Caco-2 (cell line): ENCODE measurements at regions of chr4 and their contacts with region 1.

Region 1: DNA sequence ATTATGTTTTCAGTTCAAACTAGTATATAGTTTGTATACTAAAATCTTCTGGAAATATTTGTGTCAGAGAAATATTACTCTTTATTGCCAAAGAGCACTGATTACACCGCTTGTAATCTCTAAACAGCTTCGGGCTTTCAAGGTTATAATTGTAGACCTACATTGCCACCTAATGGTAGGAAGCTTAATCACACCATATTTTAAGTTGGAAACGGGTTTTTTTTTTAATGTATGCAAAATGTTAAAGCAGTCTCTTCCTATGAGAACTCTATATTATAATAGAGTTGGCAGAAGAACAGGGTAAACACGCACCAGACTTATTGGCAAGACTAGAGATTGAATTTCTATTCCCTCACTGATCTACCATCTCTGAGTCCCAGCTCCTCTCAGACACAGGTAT is 19.5 kb upstream of the NFXL1 start:
- DNase-seq: peak in 1 of 2 experiments; percentile 31
- H3K4me3 ChIP-seq: no peak overlapping the region
- H3K4me3 Mint-ChIP-seq: no peak overlapping the region
- H3K27ac Mint-ChIP-seq: no peak overlapping the region
- H3K4me1 ChIP-seq: no peaks in the 10 kb centered on the region
- H3K4me1 Mint-ChIP-seq: peaks cover 4% of the 10 kb centered on the region
- H3K27me3 ChIP-seq: no peaks in the 10 kb centered on the region
- H3K27me3 Mint-ChIP-seq: no peaks in the 10 kb centered on the region
- CTCF ChIP-seq: peak; percentile 40 to 51

Region 2: GRCh38 chr4:47686294-47686872 is 247.5 kb before region 1 on chr4:
- CTCF ChIA-PET with region 1: interaction called, 3 read pairs
- POLR2A ChIA-PET with region 1: no interaction called
- intact Hi-C with region 1: loop called (anchors 1 kb)
- DNase-seq: peak; percentile 54 to 70
- H3K4me3 ChIP-seq: no peak overlapping the region
- H3K4me3 Mint-ChIP-seq: no peak overlapping the region
- H3K27ac Mint-ChIP-seq: no peak overlapping the region
- H3K4me1 ChIP-seq: no peaks in the 10 kb centered on the region
- H3K4me1 Mint-ChIP-seq: no peaks in the 10 kb centered on the region
- H3K27me3 ChIP-seq: no peaks in the 10 kb centered on the region
- H3K27me3 Mint-ChIP-seq: peaks cover 8% of the 10 kb centered on the region
- CTCF ChIP-seq: peak; percentile 68 to 74

Region 3: DNA sequence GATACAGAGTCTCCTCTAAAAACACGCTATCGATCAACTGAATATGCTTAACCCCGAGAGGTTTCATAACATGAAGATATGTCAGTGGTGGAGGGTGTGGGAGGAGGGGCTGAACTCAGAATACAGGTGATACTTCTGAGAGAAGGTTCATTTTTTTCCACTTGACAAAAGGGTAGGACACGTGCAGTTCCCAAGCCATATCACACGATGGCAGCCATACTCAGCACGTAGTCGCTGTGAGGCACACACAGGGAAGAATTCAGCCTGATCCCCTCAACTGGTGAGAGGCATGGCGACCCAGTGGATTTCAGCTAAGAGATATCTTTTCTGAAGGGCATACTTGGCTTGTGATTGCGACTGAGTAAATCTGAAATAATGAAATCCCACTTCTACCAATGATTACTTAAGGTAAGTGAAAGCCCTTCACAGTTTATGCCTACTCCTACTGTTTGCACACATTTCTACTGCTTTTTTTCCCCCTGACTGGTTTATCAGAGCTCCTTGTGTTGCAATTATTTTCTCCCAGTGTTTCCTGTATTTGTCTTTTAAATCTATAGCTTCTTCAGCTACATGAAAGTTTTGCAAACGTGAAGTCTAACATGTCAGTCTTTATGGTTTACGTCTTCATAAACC is 229.0 kb before region 1 on chr4:
- CTCF ChIA-PET with region 1: interaction called, 3 read pairs
- POLR2A ChIA-PET with region 1: no interaction called
- intact Hi-C with region 1: loop called (anchors 1 kb)
- DNase-seq: peak; percentile 63 to 67
- H3K4me3 ChIP-seq: no peak overlapping the region
- H3K4me3 Mint-ChIP-seq: no peak overlapping the region
- H3K27ac Mint-ChIP-seq: no peak overlapping the region
- H3K4me1 ChIP-seq: no peaks in the 10 kb centered on the region
- H3K4me1 Mint-ChIP-seq: no peaks in the 10 kb centered on the region
- H3K27me3 ChIP-seq: no peaks in the 10 kb centered on the region
- H3K27me3 Mint-ChIP-seq: no peaks in the 10 kb centered on the region
- CTCF ChIP-seq: peak; percentile 49 to 73

Region 4: GRCh38 chr4:47814618-47815295 is 119.1 kb before region 1 on chr4:
- CTCF ChIA-PET with region 1: no interaction called
- POLR2A ChIA-PET with region 1: no interaction called
- intact Hi-C with region 1: no loop called
- DNase-seq: no peak
- H3K4me3 ChIP-seq: no peak overlapping the region
- H3K4me3 Mint-ChIP-seq: no peak overlapping the region
- H3K27ac Mint-ChIP-seq: no peak overlapping the region
- H3K4me1 ChIP-seq: no peaks in the 10 kb centered on the region
- H3K4me1 Mint-ChIP-seq: no peaks in the 10 kb centered on the region
- H3K27me3 ChIP-seq: no peaks in the 10 kb centered on the region
- H3K27me3 Mint-ChIP-seq: peaks cover 10% of the 10 kb centered on the region
- CTCF ChIP-seq: no peak

Region 5: DNA sequence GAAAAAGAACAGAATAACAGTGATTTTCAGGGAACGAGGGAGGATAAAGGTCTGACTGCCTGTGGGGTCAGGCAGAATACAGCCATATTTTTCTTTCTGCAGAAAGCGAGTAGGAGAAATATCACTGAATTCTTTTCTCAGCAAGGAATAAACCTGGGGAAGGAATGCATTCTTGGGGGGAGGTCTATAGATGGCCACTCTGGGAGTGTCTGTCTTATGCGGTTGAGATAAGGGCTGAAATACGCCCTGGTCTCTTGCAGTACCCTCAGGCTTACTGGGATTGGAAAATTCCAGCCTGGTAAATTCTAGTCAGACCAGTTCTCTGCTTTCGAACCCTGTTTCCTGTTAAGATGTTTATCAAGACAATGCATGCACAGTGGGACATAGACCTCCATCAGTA is 56.3 kb after region 1 on chr4:
- CTCF ChIA-PET with region 1: no interaction called
- POLR2A ChIA-PET with region 1: no interaction called
- intact Hi-C with region 1: no loop called
- DNase-seq: peak in 1 of 2 experiments; percentile 33
- H3K4me3 ChIP-seq: no peak overlapping the region
- H3K4me3 Mint-ChIP-seq: no peak overlapping the region
- H3K27ac Mint-ChIP-seq: no peak overlapping the region
- H3K4me1 ChIP-seq: no peaks in the 10 kb centered on the region
- H3K4me1 Mint-ChIP-seq: no peaks in the 10 kb centered on the region
- H3K27me3 ChIP-seq: no peaks in the 10 kb centered on the region
- H3K27me3 Mint-ChIP-seq: no peaks in the 10 kb centered on the region
- CTCF ChIP-seq: no peak

Region 6: DNA sequence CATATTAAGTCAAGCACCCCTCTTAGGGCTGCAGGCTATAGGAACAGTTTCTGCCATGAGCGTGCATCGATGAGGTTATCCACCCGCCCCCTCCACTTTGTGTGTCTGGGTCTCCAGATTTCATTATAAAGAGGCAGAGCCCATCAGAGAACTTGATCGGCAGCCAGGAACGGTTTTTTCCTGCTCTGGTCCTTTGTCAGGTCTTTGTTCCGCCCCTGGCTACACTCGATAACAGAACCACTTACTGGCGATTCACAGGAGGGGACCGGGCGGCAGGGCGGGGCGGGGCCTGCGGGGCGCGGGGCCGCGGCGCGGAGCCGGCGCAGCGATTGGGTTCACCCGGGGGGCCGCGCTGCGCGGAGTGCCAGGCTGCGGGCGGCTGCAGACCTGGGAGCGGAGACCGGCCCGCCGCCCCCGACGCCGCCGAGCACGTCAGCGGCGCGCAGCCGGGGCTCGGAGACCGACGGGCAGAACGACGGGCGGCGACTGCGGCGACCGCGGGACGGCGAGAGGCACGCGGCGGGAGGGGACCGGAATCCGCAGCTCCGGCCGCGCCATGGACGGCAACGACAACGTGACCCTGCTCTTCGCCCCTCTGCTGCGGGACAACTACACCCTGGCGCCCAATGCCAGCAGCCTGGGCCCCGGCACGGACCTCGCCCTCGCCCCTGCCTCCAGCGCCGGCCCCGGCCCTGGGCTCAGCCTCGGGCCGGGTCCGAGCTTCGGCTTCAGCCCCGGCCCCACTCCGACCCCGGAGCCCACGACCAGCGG is 549.4 kb after region 1 on chr4 and contains the start of gene SLC10A4:
- CTCF ChIA-PET with region 1: no interaction called
- POLR2A ChIA-PET with region 1: no interaction called
- intact Hi-C with region 1: no loop called
- DNase-seq: peak in 1 of 2 experiments; percentile 62
- H3K4me3 ChIP-seq: peak within 1 kb of the TSS; percentile 50
- H3K4me3 Mint-ChIP-seq: peak within 1 kb of the TSS; percentile 70
- H3K27ac Mint-ChIP-seq: no peak within 1 kb of the TSS
- H3K4me1 ChIP-seq: no peaks in the 10 kb centered on the region
- H3K4me1 Mint-ChIP-seq: no peaks in the 10 kb centered on the region
- H3K27me3 ChIP-seq: no peaks in the 10 kb centered on the region
- H3K27me3 Mint-ChIP-seq: no peaks in the 10 kb centered on the region
- CTCF ChIP-seq: no peak
- total RNA-seq, gene SLC10A4: 1.7 and 2.6 TPM in 2 replicates